ENCODE measurements at regions of chr4 and their contacts with region 1.

Region 1: DNA sequence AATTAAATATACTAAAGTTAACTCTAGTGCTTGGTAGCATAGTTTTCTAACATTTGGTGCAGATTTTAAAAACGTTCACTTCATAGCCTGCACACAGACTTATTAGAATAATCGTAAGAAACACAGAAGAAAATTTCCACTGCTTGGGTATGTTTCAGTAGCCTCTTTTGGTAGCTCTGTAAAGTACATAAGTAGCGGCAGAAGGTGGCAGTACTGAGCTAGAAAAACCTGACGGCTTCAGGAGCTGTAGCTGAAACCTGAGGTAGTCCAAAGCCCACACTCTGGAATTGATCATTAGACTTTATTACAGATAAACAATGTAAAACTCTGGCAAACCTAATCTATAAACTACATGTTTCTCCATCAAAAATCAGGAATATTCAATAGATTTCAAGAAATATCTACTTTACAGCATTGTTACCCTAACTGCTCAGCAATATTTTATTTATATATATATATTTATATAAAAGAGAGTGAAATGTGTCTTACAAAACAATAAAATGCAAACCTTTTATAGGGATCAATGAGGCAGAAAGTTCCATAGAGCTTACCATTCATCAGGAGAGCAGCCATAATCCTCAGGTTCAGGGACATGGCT is 88.2 kb downstream of the ATP8A1 start:
- DNase-seq: peak; percentile 56
- ATAC-seq: peak; percentile 98
- H3K4me3 ChIP-seq: no peak overlapping the region
- H3K27ac ChIP-seq: no peak overlapping the region
- H3K4me1 ChIP-seq: no peaks in the 10 kb centered on the region
- H3K27me3 ChIP-seq: no peaks in the 10 kb centered on the region
- CTCF ChIP-seq: peak; percentile 76
- EP300 ChIP-seq: no peak
- POLR2A ChIP-seq: no peak
- RAD21 ChIP-seq: peak; percentile 67

Region 2: GRCh38 chr4:42656944-42657792 is 88.5 kb after region 1 on chr4 and contains the start of gene ATP8A1:
- CTCF ChIA-PET with region 1: no interaction called
- POLR2A ChIA-PET with region 1: no interaction called
- in situ Hi-C with region 1: no loop called
- intact Hi-C with region 1: loop called (anchors 2 kb)
- DNase-seq: peak; percentile 66
- ATAC-seq: peak; percentile 89
- H3K4me3 ChIP-seq: peak within 1 kb of the TSS; percentile 71 to 83 (median 75)
- H3K27ac ChIP-seq: peak within 1 kb of the TSS; percentile 87
- H3K4me1 ChIP-seq: peaks cover 34% of the 10 kb centered on the region
- H3K27me3 ChIP-seq: no peaks in the 10 kb centered on the region
- CTCF ChIP-seq: peak; percentile 13; the same call in 1 of the 2 replicates
- EP300 ChIP-seq: no peak
- POLR2A ChIP-seq: peak; percentile 82 to 92
- RAD21 ChIP-seq: peak; percentile 19; the same call in 1 of the 2 replicates
- total RNA-seq, gene ATP8A1: 4.8 and 6.2 TPM in 2 replicates

Region 3: DNA sequence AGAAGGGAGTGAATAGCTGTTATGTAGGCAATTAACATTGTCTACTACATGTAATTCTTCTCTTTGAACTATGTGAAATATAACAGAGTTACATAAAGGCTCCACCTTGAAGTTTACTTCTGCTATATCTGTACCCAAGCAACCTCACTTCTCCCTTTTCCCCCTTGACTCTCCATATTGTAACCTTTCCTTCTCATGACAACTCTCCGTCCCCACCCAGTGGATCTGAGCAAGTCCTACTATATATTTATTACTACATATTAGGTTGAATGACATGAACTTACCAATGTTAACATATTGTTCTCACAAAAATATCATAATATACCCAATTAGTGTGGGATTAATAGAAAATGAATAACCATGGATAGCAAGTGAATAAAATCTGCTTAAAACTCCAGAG is 181.4 kb after region 1 on chr4:
- CTCF ChIA-PET with region 1: interaction called, 3 read pairs
- POLR2A ChIA-PET with region 1: no interaction called
- in situ Hi-C with region 1: loop called (anchors 25 kb)
- intact Hi-C with region 1: loop called (anchors 1 kb)
- DNase-seq: no peak
- ATAC-seq: no peak
- H3K4me3 ChIP-seq: no peak overlapping the region
- H3K27ac ChIP-seq: no peak overlapping the region
- H3K4me1 ChIP-seq: no peaks in the 10 kb centered on the region
- H3K27me3 ChIP-seq: no peaks in the 10 kb centered on the region
- CTCF ChIP-seq: 0 out of 2 replicates have a peak, but pooled peaks have one; percentile 7
- EP300 ChIP-seq: no peak
- POLR2A ChIP-seq: no peak
- RAD21 ChIP-seq: no peak

Region 4: DNA sequence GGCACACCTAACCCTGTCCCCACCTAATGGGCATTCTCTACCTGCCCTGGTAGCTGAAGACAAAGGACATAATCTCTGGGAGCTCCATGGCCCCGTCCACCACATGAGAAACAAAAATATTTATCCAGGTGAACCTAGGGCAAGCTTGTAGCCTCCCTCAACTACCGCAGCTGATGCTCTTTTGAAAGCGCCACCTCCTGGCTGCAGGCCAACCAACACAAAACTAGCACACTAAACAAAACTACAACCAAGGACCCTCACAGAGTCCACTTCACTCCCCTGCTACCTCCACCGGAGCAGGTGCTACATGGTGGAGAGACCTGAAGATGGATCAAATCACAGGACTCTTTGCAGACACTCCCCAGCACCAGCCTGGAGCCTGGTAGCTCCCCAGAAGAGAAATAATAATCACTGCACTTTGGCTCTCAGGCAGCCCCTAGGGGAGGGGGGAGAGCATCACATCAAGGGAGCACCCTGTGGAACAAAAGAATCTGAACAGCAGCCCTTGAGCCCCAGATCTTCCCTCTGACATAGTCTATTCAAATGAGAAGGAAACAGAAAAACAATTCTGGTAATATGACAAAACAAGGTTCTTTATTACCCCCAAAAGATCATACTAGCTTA is 199.5 kb after region 1 on chr4:
- CTCF ChIA-PET with region 1: no interaction called
- POLR2A ChIA-PET with region 1: no interaction called
- in situ Hi-C with region 1: loop called (anchors 25 kb)
- intact Hi-C with region 1: loop called (anchors 1 kb)
- DNase-seq: no peak
- ATAC-seq: peak; percentile 76
- H3K4me3 ChIP-seq: no peak overlapping the region
- H3K27ac ChIP-seq: no peak overlapping the region
- H3K4me1 ChIP-seq: no peaks in the 10 kb centered on the region
- H3K27me3 ChIP-seq: no peaks in the 10 kb centered on the region
- CTCF ChIP-seq: peak; percentile 42
- EP300 ChIP-seq: no peak
- POLR2A ChIP-seq: no peak
- RAD21 ChIP-seq: no peak

Region 5: DNA sequence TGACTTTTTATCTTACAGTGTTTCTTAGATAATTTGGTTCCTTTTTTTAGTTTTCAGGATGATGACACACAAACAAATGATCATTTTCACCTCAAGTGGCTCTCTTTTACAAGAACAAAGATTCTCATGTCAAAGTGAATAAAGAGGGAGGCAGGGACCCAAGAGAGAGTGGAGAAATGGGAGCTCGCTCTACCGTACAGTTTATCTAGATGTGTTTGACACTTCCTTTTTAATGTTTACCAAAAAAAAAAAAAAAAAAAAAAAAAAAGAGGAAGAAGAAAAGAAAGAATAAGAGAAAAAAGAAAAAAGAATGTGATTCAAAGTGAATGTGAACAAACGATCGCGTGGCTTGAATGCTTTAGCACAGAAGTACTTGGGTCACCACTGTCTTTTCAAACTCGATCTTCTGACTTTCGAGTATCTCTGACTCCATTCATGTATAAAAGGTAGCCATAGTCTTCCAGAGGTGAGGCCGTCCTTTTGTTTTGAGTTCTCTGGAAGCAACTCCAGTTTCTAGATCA is 248.2 kb after region 1 on chr4:
- CTCF ChIA-PET with region 1: interaction called, 3 read pairs
- POLR2A ChIA-PET with region 1: no interaction called
- in situ Hi-C with region 1: no loop called
- intact Hi-C with region 1: loop called (anchors 1 kb)
- DNase-seq: no peak
- ATAC-seq: no peak
- H3K4me3 ChIP-seq: no peak overlapping the region
- H3K27ac ChIP-seq: no peak overlapping the region
- H3K4me1 ChIP-seq: no peaks in the 10 kb centered on the region
- H3K27me3 ChIP-seq: no peaks in the 10 kb centered on the region; a peak in 1 of 5 replicates
- CTCF ChIP-seq: no peak
- EP300 ChIP-seq: no peak
- POLR2A ChIP-seq: no peak
- RAD21 ChIP-seq: no peak

Region 6: GRCh38 chr4:42865572-42866189 is 297.0 kb after region 1 on chr4:
- CTCF ChIA-PET with region 1: interaction called, 51 read pairs
- POLR2A ChIA-PET with region 1: no interaction called
- in situ Hi-C with region 1: loop called (anchors 5 kb)
- intact Hi-C with region 1: loop called (anchors 1 kb)
- DNase-seq: peak; percentile 48
- ATAC-seq: peak; percentile 68
- H3K4me3 ChIP-seq: no peak overlapping the region
- H3K27ac ChIP-seq: no peak overlapping the region
- H3K4me1 ChIP-seq: no peaks in the 10 kb centered on the region
- H3K27me3 ChIP-seq: no peaks in the 10 kb centered on the region; a peak in 1 of 5 replicates
- CTCF ChIP-seq: peak; percentile 71
- EP300 ChIP-seq: no peak
- POLR2A ChIP-seq: no peak
- RAD21 ChIP-seq: no peak

Measured in HepG2 (cell line).